ENCODE measurements at regions of chr13 and their contacts with region 1.

Region 1: DNA sequence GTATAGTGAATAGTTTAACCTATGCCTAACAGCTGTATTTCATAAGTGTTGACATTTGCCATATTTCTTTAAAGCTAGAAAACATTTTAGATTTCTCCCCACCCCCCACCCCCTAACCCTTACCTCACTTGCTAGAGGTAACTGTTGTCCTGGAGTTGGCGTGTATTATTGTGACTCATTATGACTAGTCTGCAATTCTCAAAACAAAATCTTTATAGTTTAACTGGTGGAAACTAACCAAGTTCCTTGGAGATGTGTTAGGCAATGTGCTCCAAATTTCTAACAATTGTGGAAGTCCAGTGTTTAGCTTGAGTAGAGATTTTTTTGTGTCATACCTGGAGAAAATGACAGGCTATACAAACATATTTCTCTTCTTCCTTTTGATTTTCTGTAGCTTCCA is 38.0 kb downstream of the KCTD4 start:
- DNase-seq: peak; percentile 92
- ATAC-seq: peak; percentile 86
- H3K4me3 ChIP-seq: peak overlapping the region; percentile 32; the same call in 1 of the 2 replicates
- H3K27ac ChIP-seq: peak overlapping the region; percentile 86
- H3K4me1 ChIP-seq: peaks cover 35% of the 10 kb centered on the region
- H3K27me3 ChIP-seq: no peaks in the 10 kb centered on the region
- CTCF ChIP-seq: no peak

Region 2: DNA sequence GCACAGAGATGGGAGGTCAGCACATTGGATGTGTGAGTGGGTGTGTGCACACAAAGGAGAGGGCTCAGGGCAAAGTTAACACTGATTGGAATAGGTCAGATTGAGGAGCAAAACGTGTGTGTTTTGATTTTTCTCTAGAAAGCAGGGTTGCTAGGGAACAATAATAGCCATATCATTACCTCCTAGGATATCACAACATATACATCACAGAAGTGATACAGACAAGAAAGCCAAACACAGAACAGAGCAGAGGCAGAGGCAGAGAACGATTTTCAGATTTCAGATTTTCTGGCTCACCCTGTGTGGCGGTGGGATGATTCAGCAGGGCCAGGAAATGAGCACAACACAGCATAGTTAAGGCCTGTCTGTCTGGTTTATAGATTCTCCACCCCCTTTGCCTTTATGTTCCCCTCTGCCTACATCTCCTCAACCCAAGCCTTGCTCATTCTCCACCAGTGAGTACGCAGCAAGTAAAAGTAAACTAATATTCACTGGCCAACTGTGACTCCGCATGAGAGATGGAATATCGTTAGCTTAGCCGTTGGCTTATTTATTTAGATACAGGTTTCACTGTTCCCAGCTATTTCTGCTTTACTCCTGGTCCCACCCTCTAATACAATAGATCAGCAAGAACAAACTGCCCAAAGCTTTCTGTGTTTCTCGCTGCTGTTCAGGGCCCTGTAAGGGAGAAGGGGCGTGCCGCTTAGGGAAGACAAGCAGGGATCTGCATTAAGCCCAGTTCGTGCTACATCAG is 404.0 kb before region 1 on chr13:
- CTCF ChIA-PET with region 1: no interaction called
- POLR2A ChIA-PET with region 1: no interaction called
- intact Hi-C with region 1: no loop called
- DNase-seq: peak; percentile 88
- ATAC-seq: peak; percentile 97
- H3K4me3 ChIP-seq: peak overlapping the region; percentile 32; the same call in 1 of the 2 replicates
- H3K27ac ChIP-seq: peak overlapping the region; percentile 94
- H3K4me1 ChIP-seq: peaks cover 45% of the 10 kb centered on the region
- H3K27me3 ChIP-seq: no peaks in the 10 kb centered on the region
- CTCF ChIP-seq: no peak

Region 3: DNA sequence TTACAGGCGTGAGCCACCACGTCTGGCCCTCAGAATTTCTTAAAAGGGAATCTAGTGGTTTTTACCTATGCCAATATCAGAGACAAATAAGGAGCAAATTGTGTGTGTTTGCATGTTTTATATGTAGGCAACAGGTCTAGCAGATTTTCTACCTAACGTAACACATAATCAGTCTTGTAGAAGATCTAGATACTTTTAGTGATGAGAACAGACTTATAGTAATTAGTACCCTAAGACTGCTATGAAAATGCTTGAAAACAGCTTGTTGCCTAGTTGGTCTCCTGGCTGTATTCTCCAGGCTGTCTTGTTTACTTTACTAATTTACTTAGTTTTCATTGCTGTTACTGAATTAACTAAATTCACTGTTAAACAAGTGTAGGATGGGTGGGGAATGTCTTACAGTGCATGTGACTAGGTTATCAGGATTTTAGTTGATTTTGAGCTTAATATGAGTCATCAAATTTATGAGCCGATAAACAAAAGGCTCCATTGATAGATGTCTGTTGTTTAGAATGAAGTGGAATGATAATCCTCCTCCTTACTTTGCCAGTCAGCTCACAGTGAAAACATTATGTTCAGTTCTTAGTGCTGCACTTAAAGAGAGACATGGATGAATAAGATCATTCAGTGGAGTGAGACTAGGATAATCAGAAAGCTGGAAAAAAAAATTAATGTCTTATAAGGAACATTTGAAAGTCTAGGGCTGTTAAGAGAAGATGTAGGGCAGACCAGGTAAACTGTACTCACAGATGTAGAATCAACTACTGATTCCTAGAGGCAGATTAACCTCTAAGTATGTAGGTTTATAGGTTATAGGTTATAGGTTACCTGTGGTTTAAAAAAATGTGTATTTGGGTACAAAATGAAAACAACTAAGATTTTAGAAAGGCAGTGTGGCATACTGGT is 20.1 kb before region 1 on chr13:
- CTCF ChIA-PET with region 1: no interaction called
- POLR2A ChIA-PET with region 1: interaction called, 3 read pairs
- intact Hi-C with region 1: loop called (anchors 2 kb)
- DNase-seq: peak; percentile 67
- ATAC-seq: peak; percentile 85
- H3K4me3 ChIP-seq: 0 out of 2 replicates have a peak overlapping the region, but pooled peaks have one; percentile 14
- H3K27ac ChIP-seq: peak overlapping the region; percentile 57
- H3K4me1 ChIP-seq: peaks cover 21% of the 10 kb centered on the region
- H3K27me3 ChIP-seq: no peaks in the 10 kb centered on the region
- CTCF ChIP-seq: no peak

Region 4: GRCh38 chr13:45206340-45206739 is 43.5 kb after region 1 on chr13:
- CTCF ChIA-PET with region 1: no interaction called
- POLR2A ChIA-PET with region 1: no interaction called
- intact Hi-C with region 1: loop called (anchors 5 kb)
- DNase-seq: peak; percentile 89
- ATAC-seq: peak; percentile 96
- H3K4me3 ChIP-seq: no peak overlapping the region
- H3K27ac ChIP-seq: peak overlapping the region; percentile 80
- H3K4me1 ChIP-seq: peaks cover 50% of the 10 kb centered on the region
- H3K27me3 ChIP-seq: no peaks in the 10 kb centered on the region
- CTCF ChIP-seq: no peak

Region 5: GRCh38 chr13:45219938-45220375 is 57.1 kb after region 1 on chr13:
- CTCF ChIA-PET with region 1: no interaction called
- POLR2A ChIA-PET with region 1: no interaction called
- intact Hi-C with region 1: loop called (anchors 2 kb)
- DNase-seq: peak; percentile 93
- ATAC-seq: peak; percentile 94
- H3K4me3 ChIP-seq: peak overlapping the region; percentile 45; the same call in 1 of the 2 replicates
- H3K27ac ChIP-seq: peak overlapping the region; percentile 91
- H3K4me1 ChIP-seq: peaks cover 31% of the 10 kb centered on the region
- H3K27me3 ChIP-seq: no peaks in the 10 kb centered on the region
- CTCF ChIP-seq: no peak

Region 6: DNA sequence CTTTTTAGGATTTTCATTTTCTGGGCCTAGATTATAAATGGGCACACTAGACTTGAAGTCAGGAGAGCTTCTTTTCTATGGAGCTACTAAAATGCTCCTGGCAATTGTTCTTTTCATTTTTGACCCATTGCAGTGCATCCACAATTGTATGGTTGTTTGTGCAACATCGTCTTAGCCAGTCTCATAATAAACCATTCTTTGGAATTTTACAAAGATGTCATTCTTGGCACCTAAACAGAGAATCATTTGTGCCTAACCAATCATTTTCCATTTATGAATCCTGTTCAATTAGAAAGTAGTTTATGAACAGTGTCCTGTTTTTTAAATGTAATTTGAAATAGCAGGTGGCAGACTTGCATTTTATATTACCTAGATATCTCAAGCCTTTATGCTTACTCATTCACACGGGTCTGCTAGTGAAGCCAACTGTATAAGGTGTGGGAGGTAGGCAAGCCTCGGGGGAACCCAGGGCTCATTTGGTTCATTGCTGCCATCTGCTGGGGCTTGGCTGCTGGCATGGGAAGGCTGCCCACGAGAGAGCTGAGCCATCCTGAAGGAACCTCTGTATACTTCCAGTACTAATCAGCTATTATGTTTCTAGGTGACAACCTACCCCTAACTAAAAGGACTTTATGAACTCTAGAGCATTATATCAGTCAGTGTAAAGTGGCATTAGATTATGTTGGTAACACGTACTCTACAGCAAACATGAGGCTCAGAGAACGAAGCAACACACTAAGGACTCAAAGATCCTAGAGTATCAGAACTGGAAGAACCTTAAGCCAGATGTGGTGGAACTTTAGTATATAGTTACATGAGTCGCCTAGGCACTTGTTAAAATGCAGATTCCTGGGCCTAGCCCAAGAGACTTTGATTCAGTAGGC is 118.2 kb after region 1 on chr13:
- CTCF ChIA-PET with region 1: no interaction called
- POLR2A ChIA-PET with region 1: interaction called, 3 read pairs
- intact Hi-C with region 1: loop called (anchors 10 kb)
- DNase-seq: peak; percentile 83
- ATAC-seq: peak; percentile 99
- H3K4me3 ChIP-seq: no peak overlapping the region
- H3K27ac ChIP-seq: no peak overlapping the region
- H3K4me1 ChIP-seq: peaks cover 10% of the 10 kb centered on the region; the same call in 1 of the 2 replicates
- H3K27me3 ChIP-seq: no peaks in the 10 kb centered on the region
- CTCF ChIP-seq: peak; percentile 87